Vagina (tissue), 2 donors: ENCODE measurements at regions of chr10 and their contacts with region 1.

Region 1: DNA sequence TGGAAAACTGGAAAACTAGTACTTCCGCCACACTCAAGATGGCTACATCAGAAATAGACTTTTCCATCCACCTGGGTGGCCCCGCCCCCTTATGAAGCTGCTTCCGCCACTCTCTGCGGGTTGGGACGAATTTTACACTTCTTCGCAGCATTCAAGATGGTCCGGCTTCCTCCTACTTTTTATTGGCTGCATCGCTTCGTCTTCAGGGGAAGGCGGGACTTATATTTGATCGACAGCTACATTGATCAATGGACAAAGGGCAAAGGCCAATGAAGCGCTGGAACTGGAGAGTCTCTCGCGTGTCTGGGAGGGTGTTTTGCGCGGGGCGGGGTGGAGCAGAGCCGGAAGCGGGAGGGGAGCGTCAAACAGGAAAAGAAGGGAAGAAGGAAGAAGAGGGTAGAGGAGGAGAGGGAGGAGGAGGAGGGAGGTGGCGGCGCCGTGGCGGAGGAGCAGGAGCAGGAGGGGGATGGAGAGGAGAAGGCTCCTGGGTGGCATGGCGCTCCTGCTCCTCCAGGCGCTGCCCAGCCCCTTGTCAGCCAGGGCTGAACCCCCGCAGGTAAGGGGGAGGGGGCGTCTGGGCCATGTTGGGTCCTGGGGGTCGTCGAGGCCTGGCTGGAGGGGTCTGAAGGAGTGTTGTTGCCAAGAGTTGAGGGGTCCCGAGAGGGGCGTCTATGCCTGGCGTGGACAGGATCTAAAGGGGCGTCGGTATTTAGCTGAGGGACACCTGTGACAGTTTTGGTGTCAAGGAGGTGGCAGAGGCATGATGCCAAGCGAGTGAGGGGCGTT is at the start of gene WBP1L:
- DNase-seq: peak; percentile 99 to 100
- H3K4me3 ChIP-seq: peak within 1 kb of the TSS; percentile 88 to 99
- H3K27ac ChIP-seq: peak within 1 kb of the TSS; percentile 91
- H3K4me1 ChIP-seq: peaks cover 41% of the 10 kb centered on the region
- H3K27me3 ChIP-seq: no peaks in the 10 kb centered on the region
- CTCF ChIP-seq: no peak
- POLR2A ChIP-seq: peak in 1 of 2 donors; percentile 80
- total RNA-seq, gene WBP1L: 80.8 TPM

Region 2: DNA sequence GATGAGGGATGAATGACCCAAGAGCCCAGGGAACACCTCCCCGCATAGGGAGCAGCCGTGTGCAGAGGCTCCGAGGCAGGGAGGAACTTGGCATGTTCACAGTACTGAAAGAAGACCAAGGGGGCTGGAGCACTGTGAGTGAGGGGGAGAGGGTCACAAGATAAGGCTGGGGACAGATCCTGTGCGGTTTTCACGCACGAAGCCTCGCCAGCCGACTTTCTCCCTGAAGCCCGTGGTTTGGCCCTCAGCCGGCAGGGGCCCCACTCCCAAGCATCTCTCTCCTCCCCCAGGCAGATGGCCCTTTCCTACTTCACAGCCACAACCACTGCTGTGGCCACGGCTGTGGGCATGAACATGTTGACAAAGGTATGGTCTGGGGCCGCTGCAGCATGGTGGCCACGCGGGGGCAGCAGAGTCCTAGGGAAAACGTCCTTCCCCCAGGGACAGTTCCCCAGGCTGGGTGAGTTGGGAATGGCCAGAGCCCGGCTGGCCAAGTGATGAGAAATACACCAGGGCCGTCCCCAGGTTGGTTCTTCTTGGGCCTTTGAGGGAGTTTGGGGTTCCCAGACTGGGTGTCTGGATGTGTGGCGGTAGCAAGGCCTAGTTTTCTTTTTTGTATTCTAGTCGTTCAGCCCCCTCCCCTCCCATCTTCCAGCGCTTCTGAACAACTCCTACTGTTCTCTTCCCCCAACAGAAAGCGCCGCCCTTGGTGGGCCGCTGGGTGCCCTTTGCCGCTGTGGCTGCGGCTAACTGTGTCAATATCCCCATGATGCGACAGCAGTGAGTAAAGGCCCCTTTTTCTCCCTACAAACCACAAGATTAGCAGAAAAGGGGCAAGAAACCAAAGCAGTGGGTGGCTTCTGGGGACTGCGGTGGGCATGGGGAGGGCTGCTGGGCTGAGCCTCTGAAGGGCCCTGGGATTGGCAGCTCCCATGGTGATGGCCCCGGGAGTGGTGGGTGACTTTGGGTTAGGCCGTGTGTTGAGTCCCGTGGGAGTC is 14.5 kb before region 1 on chr10:
- intact Hi-C with region 1: no loop called
- DNase-seq: no peak
- H3K4me3 ChIP-seq: no peak overlapping the region
- H3K27ac ChIP-seq: no peak overlapping the region
- H3K4me1 ChIP-seq: no peaks in the 10 kb centered on the region
- H3K27me3 ChIP-seq: no peaks in the 10 kb centered on the region
- CTCF ChIP-seq: peak; percentile 85 to 92 (median 91)
- POLR2A ChIP-seq: no peak

Region 3: GRCh38 chr10:102776779-102777456 is 33.1 kb after region 1 on chr10:
- intact Hi-C with region 1: loop called (anchors 5 kb)
- DNase-seq: peak in 1 of 2 donors; percentile 93
- H3K4me3 ChIP-seq: peak overlapping the region; percentile 33 to 45
- H3K27ac ChIP-seq: peak overlapping the region; percentile 88
- H3K4me1 ChIP-seq: peaks cover 93% of the 10 kb centered on the region
- H3K27me3 ChIP-seq: no peaks in the 10 kb centered on the region
- CTCF ChIP-seq: no peak
- POLR2A ChIP-seq: no peak

Region 4: GRCh38 chr10:102815790-102816549 is 72.2 kb after region 1 on chr10:
- intact Hi-C with region 1: loop called (anchors 5 kb)
- DNase-seq: peak in 1 of 2 donors; percentile 94
- H3K4me3 ChIP-seq: no peak overlapping the region
- H3K27ac ChIP-seq: peak overlapping the region; percentile 87
- H3K4me1 ChIP-seq: peaks cover 51% of the 10 kb centered on the region
- H3K27me3 ChIP-seq: no peaks in the 10 kb centered on the region
- CTCF ChIP-seq: no peak
- POLR2A ChIP-seq: peak in 1 of 2 donors; percentile 25